Lower leg skin (tissue), 4 donors: ENCODE measurements at regions of chr13 and their contacts with region 1.

Region 1: DNA sequence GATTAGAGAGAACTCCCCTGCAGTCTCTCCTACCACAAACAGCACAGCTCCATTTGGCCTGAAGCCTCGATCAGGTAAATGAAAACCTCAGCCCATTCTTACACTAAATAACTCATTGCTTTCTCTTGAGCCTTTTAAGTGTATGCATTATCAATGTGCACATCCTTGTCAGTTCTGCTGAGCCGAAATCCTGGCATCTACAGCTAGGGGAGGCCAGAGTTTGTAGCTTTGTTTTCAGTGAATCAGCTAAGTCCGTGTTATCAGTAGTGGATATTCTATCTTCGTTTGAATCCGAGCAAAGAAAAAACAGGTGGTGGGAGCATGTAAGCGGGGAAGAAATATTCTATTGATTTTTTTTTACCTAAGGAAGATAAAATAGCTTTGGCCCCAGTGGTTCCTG is 84.4 kb downstream of the ESD start:
- DNase-seq: no peak
- H3K4me3 ChIP-seq: no peak overlapping the region
- CTCF ChIP-seq: no peak
- POLR2A ChIP-seq: no peak

Region 2: DNA sequence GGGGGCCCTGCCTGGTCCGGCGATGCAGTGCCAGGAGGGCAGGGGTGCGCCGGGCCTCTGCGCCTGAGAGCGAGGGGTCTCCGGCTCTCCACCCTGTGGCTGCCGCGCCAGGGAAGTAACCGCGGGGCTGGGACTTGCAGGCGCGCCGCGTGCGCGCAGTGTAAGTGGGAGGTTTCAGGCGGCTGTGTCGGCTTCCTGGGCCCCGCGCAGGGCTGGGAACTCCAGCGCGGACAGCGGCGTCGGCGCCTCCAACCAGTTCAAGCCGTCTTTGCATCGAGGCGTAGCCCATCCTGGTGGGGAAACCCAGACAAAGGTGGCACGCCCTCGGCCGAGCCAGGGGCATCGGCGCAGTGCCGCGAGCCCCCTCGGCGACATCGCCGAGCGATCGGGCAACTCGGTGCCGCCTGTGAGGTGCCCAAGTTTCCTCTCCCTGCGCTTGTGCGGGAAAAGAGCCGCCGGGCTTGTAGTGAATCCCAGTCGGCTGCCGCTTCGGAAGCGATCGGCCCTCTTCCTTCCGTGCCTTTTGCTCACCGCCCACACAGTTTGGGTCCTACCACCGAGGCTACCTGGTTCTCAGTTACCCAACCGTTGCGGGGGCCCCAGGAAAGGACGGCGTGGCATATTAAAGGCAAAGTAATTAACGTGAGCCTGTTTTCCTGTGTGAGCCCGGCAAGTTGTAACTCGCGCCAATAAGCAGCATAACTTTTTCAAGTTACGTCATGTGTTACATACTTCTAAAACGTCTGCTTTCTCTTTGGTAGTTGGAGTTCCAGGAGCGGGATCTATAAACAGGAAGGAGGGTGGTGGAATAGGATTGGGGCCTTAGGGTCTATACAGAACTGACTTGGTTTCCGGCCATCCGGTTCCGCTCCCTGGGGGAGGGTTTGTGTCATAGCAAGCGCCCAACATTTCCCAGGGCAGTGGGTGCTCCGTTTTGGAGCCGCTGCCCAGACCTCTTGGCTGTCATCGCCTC is 158.4 kb before region 1 on chr13:
- intact Hi-C with region 1: loop called (anchors 10 kb)
- DNase-seq: peak; percentile 58 to 94
- H3K4me3 ChIP-seq: peak overlapping the region; percentile 96
- CTCF ChIP-seq: no peak
- POLR2A ChIP-seq: no peak

Region 3: GRCh38 chr13:47350334-47351124 is 638.0 kb after region 1 on chr13:
- intact Hi-C with region 1: no loop called
- DNase-seq: no peak
- H3K4me3 ChIP-seq: no peak overlapping the region
- CTCF ChIP-seq: no peak
- POLR2A ChIP-seq: no peak